OCI-LY7 (cell line): ENCODE measurements at regions of chr4 and their contacts with region 1.

Region 1: DNA sequence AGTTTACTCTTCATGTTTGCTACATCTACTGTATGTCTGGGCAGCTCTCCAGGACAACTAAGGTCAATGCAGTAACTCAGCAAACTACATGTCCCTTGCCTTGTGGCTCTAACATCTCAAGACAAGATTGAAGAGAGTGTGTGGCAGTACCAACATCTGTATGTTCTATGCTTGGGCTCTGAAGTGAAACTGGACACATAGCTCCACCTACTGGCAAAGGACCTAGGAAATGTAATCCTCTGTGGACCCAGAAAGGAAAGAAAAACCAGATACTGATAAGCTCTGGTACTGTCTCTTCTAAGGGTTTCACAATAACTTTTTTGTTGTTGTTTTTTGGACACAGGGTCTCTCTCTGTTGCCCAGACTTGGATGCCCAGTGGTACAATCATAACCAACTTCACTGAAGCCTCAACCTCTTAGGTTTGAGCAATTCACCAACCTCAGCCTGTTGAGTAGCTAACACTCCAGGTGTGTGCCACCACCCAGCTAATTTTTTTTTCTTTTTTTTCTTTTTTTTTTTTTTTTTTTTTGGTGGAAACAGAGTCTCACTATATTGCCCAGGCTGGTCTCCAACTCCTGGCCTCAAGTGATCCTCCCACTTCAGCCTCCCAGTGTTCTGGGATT is 64.1 kb downstream of the QDPR start:
- DNase-seq: peak; percentile 84
- H3K4me3 ChIP-seq: no peak overlapping the region
- H3K27ac ChIP-seq: no peak overlapping the region
- H3K4me1 ChIP-seq: no peaks in the 10 kb centered on the region
- CTCF ChIP-seq: peak; percentile 92

Region 2: GRCh38 chr4:16794816-16795445 is 652.9 kb before region 1 on chr4:
- CTCF ChIA-PET with region 1: no interaction called
- POLR2A ChIA-PET with region 1: no interaction called
- intact Hi-C with region 1: loop called (anchors 10 kb)
- DNase-seq: peak; percentile 37
- H3K4me3 ChIP-seq: no peak overlapping the region
- H3K27ac ChIP-seq: no peak overlapping the region
- H3K4me1 ChIP-seq: no peaks in the 10 kb centered on the region
- CTCF ChIP-seq: peak; percentile 86

Region 3: GRCh38 chr4:16916719-16917337 is 531.0 kb before region 1 on chr4:
- CTCF ChIA-PET with region 1: no interaction called
- POLR2A ChIA-PET with region 1: no interaction called
- intact Hi-C with region 1: loop called (anchors 5 kb)
- DNase-seq: peak; percentile 71
- H3K4me3 ChIP-seq: no peak overlapping the region
- H3K27ac ChIP-seq: no peak overlapping the region
- H3K4me1 ChIP-seq: no peaks in the 10 kb centered on the region
- CTCF ChIP-seq: peak; percentile 96

Region 4: DNA sequence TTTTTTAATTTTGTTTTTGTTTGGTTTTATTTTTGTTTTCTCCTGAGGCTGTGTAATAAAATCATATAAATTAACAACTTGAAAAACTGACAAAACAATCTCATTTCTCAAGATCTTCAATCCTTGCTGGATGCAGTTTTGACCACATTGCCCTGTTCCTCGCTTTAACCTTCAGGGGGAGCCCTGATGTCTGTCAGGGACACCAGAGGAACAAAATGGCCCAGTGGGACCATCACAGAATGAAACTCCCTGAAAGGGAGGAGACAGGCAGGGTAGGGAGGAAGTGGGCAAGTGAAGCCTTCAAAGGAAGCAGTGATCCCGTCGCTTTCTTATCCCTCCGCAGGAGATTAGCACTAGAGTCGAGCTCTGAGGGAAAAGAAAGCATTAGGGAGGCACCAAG is 274.5 kb before region 1 on chr4:
- CTCF ChIA-PET with region 1: no interaction called
- POLR2A ChIA-PET with region 1: no interaction called
- intact Hi-C with region 1: loop called (anchors 5 kb)
- DNase-seq: peak; percentile 10
- H3K4me3 ChIP-seq: no peak overlapping the region
- H3K27ac ChIP-seq: no peak overlapping the region
- H3K4me1 ChIP-seq: no peaks in the 10 kb centered on the region
- CTCF ChIP-seq: peak; percentile 60

Region 5: GRCh38 chr4:17280261-17281018 is 167.3 kb before region 1 on chr4:
- CTCF ChIA-PET with region 1: no interaction called
- POLR2A ChIA-PET with region 1: interaction called, 3 read pairs
- intact Hi-C with region 1: loop called (anchors 1 kb)
- DNase-seq: no peak
- H3K4me3 ChIP-seq: no peak overlapping the region
- H3K27ac ChIP-seq: no peak overlapping the region
- H3K4me1 ChIP-seq: no peaks in the 10 kb centered on the region
- CTCF ChIP-seq: peak; percentile 54

Region 6: DNA sequence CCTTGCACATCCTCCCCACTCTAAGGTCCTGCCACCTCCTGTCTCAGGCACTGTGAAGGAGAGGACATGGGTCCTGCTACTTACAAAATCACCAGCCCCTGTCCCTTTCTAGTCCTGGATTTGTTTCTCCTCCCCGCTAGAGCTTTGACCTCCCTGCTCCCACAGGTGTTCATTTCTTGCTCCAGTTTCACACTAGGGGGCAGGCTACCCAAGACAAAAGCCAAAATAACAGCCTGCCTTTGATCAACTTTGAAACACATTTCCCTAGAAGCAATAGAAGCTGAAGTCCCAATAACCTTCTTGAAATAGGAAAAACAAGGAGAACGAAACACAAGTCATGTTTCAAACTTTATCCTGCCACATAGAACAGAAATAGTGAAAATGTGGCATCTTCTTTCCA is 100.3 kb before region 1 on chr4:
- CTCF ChIA-PET with region 1: interaction called, 8 read pairs
- POLR2A ChIA-PET with region 1: interaction called, 4 read pairs
- intact Hi-C with region 1: loop called (anchors 1 kb)
- DNase-seq: peak; percentile 71
- H3K4me3 ChIP-seq: no peak overlapping the region
- H3K27ac ChIP-seq: no peak overlapping the region
- H3K4me1 ChIP-seq: no peaks in the 10 kb centered on the region
- CTCF ChIP-seq: peak; percentile 86